AG04450 (cell line): ENCODE measurements at regions of chr1 and their contacts with region 1.

Region 1: GRCh38 chr1:16366722-16367257 is at the start of gene SZRD1:
- DNase-seq: peak; percentile 99
- H3K4me3 ChIP-seq: peak within 1 kb of the TSS; percentile 84
- H3K27ac ChIP-seq: peak within 1 kb of the TSS; percentile 97
- H3K27me3 ChIP-seq: no peaks in the 10 kb centered on the region
- CTCF ChIP-seq: no peak
- polyA plus RNA-seq, gene SZRD1: 92.0 and 119 TPM in 2 replicates

Region 2: GRCh38 chr1:16307222-16307621 is 59.6 kb before region 1 on chr1:
- CTCF ChIA-PET with region 1: interaction called, 10 read pairs
- POLR2A ChIA-PET with region 1: no interaction called
- DNase-seq: no peak
- H3K4me3 ChIP-seq: no peak overlapping the region
- H3K27ac ChIP-seq: no peak overlapping the region
- H3K27me3 ChIP-seq: no peaks in the 10 kb centered on the region
- CTCF ChIP-seq: no peak

Region 3: DNA sequence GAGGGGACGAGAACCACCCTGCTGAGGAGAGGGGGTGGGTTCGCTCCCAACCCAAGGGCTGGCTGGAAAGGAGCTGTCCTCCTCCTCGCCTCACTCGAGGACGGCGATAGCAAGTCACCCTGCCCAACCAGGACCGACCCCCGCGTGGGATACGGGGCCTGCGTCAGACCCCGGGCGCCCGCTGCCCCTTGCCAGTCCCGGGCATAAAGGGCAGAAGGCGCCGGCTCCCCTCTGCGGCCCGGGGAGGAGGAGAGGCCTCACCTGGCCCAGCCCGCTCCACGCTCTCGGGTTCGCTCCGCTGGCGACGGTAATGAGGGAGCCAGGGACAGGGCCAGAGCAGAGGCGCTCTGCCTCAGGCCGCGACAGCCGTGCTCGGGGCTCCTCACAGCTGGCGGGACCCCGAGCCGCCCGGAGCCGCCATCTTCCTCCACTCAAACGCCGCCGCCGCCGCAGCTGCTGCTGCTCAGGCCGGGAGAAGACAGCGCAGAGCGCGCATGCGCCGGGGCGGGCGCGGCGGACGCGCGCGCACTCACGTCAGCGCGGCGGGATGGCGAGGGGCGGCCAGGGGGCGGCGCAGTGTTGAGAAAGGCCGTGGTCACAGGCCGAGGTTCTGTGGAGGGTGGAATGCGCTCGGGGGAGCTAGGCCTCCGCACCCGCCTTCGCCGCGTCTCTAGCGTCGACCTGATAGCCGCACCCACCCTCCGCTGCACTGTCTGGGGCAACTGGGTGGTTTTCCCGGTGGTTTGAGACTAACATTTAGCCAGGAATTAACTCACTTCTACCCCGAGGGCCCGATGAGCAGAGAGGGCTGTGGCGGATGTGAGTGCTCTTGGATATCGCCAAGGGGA is 14.6 kb before region 1 on chr1 and contains the start of gene FBXO42:
- CTCF ChIA-PET with region 1: interaction called, 47 read pairs
- POLR2A ChIA-PET with region 1: interaction called, 8 read pairs
- DNase-seq: peak; percentile 80
- H3K4me3 ChIP-seq: peak within 1 kb of the TSS; percentile 97
- H3K27ac ChIP-seq: peak within 1 kb of the TSS; percentile 90
- H3K27me3 ChIP-seq: no peaks in the 10 kb centered on the region
- CTCF ChIP-seq: peak; percentile 57
- polyA plus RNA-seq, gene FBXO42: 15.1 and 16.8 TPM in 2 replicates

Region 4: DNA sequence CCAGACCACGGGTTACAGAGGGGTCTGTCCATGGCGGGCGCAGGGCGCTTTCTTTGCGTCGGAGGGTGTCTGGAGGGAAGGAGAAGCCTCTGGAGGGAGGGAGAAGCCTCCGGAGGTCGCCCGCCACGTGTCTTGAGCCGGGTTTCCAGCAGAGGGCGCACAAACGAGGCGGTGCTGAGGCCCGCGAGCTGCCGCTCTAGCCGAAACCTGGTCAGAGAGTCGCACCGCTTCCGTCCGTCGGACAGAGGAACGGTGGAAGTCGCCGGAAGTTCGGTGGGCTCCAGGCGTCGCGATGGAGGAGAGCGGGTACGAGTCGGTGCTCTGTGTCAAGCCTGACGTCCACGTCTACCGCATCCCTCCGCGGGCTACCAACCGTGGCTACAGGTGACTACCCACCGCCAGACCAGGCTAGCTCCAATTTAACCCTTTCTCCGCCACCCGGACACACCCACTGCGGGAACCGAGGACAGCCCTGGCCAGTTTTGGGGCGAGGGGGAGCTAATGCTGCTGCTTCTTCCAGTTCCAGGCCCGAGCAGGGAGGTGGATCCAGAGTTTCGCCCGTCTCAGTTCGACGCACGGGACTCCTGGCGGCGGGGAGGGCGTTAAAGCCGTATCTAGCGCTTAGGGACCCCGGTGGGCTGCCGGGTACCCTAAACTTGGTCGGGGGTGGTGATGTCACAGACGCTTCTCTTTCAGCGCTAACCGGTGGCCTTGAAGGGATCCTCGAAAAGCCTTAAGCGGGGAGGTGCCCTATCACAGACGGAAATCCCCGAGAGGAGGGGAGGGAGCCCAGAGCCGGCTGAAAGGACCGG is 73.9 kb after region 1 on chr1 and contains the start of gene NECAP2:
- CTCF ChIA-PET with region 1: interaction called, 28 read pairs
- POLR2A ChIA-PET with region 1: no interaction called
- DNase-seq: peak; percentile 85
- H3K4me3 ChIP-seq: peak within 1 kb of the TSS; percentile 99
- H3K27ac ChIP-seq: peak within 1 kb of the TSS; percentile 82
- H3K27me3 ChIP-seq: no peaks in the 10 kb centered on the region
- CTCF ChIP-seq: peak; percentile 72
- polyA plus RNA-seq, gene NECAP2: 108 and 111 TPM in 2 replicates